CD8-positive, alpha-beta T cell (primary cell): ENCODE measurements at regions of chr9 and their contacts with region 1.

Region 1: DNA sequence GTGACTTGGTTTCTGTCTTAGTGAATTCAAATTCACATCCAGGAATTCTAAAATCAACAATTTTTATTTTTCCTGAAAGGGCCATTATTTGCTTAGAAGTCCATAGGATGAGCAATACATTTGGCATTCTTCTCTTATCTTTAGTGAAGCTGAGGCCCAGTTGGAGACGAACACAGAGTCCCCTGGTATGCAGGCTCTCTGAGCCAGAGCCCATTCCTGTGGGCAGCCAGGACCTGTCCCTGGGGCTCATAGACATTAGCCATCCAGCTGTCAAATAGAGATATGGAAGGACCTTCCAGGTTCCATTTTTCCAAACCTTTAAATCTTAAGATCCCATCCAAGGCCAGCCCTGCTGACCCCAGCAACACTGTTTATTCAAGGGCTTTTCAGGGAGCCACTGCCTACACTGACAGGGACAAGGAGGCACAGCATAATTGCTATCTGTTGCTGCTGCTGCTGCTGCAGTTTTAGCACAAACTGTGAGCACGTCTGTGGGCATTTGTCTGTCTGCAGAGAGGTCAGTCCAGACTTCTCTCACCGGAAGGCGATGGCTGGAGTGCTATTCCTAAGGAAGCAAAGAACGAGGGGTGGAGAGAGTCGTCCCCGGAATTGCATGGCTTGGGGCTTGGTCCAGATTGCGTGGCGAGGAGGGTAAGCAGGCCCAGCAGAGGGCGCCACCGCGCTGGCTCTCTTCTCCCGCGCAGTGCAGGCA is 639.0 kb downstream of the CCDC171 start:
- DNase-seq: peak in 8 of 9 experiments; percentile 19 to 63 (median 34)
- ATAC-seq: peak; percentile 51
- H3K4me3 ChIP-seq: no peak overlapping the region
- H3K4me3 Mint-ChIP-seq: no peak overlapping the region
- H3K27ac ChIP-seq: no peak overlapping the region
- H3K27ac Mint-ChIP-seq: no peak overlapping the region
- H3K4me1 ChIP-seq: no peaks in the 10 kb centered on the region
- H3K4me1 Mint-ChIP-seq: peaks cover 3% of the 10 kb centered on the region
- H3K27me3 ChIP-seq: no peaks in the 10 kb centered on the region
- H3K27me3 Mint-ChIP-seq: no peaks in the 10 kb centered on the region
- CTCF ChIP-seq: peak; percentile 17

Region 2: DNA sequence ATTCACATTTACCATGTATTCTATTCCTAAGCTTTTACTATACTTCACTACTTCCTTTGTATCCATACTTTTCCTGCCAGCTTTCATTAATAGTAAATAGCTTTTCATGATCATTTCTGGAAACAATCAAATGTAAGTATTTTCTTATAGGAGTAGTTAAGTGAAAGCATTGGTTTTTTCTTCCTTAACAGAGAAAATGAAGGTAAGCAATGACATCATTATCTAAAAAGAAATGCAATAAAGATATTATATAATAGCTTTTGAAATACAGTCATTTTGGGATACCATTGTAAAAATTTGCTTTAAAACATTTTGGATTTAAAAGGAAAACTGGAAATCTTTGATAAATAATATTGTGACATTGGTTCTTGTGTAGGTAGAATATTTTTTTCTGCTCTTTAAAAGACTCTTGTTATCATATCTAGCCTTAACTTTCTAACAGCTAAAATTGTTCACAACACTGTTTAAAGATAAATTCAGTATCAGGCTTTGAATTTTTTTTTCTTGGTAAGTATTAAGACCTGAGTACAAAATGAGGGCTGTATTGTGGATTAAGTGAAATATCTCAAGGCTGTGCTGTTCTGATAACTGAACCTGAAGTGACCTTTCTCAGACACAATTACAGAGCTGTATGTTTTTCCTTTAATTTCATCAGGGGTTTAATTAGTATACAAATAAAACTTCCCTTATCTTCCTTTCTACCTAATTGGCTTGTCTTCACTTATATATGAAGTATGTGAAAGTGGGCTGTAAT is 348.7 kb before region 1 on chr9:
- CTCF ChIA-PET with region 1: no interaction called
- POLR2A ChIA-PET with region 1: no interaction called
- intact Hi-C with region 1: no loop called
- DNase-seq: no peak
- ATAC-seq: no peak
- H3K4me3 ChIP-seq: no peak overlapping the region
- H3K4me3 Mint-ChIP-seq: no peak overlapping the region
- H3K27ac ChIP-seq: no peak overlapping the region
- H3K27ac Mint-ChIP-seq: no peak overlapping the region
- H3K4me1 ChIP-seq: no peaks in the 10 kb centered on the region
- H3K4me1 Mint-ChIP-seq: no peaks in the 10 kb centered on the region
- H3K27me3 ChIP-seq: no peaks in the 10 kb centered on the region
- H3K27me3 Mint-ChIP-seq: no peaks in the 10 kb centered on the region
- CTCF ChIP-seq: no peak

Region 3: GRCh38 chr9:16133556-16134227 is 58.2 kb before region 1 on chr9:
- CTCF ChIA-PET with region 1: no interaction called
- POLR2A ChIA-PET with region 1: no interaction called
- intact Hi-C with region 1: loop called in 1 of 2 experiments (anchors 5 kb)
- DNase-seq: peak in 2 of 9 experiments; percentile 20 to 47
- ATAC-seq: no peak
- H3K4me3 ChIP-seq: no peak overlapping the region
- H3K4me3 Mint-ChIP-seq: no peak overlapping the region
- H3K27ac ChIP-seq: no peak overlapping the region
- H3K27ac Mint-ChIP-seq: no peak overlapping the region
- H3K4me1 ChIP-seq: no peaks in the 10 kb centered on the region
- H3K4me1 Mint-ChIP-seq: peaks cover 2% of the 10 kb centered on the region
- H3K27me3 ChIP-seq: no peaks in the 10 kb centered on the region
- H3K27me3 Mint-ChIP-seq: peaks cover 6% of the 10 kb centered on the region
- CTCF ChIP-seq: peak; percentile 31